GM12878 (cell line): ENCODE measurements at regions of chr19 and their contacts with region 1.

Region 1: DNA sequence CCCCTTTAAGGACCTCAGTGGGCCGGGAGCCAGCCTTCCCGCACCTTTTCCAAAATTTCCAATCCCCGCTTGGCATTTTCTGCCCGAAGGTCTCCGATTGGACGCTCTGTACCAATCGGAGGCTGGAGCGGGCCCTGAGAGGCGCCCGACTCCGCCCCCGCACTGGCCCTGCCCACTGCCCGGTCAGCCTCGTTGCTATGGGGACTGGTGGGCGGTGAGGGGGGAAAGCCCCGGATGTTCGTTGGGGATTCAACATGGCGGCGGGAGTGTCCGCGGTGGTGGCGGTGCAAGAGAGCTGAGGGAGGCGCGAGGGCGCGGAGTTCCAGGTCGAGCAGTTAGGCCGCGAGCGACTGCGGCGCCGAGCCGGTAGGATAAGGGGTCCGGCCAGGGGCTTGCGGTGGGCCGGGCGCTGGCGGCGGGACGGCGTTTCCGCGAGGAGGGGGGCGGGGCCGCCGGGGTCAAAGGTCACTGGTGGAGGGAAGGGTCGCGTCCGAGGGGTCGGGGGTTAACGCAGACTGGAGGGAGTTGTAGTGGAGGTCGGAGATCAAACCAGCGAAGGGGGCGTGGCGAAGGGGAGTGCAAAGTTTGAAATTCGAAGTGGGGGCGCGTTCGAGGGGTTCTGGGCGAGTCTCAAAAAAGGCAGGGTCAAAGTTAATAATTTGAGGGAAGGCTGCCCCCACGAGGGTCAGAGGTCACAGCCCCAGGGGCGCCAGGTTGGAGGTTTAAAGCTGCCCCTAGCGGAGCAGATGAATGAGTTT is at the start of gene PAK4:
- DNase-seq: peak; percentile 82
- ATAC-seq: peak; percentile 98
- H3K4me3 ChIP-seq: peak within 1 kb of the TSS; percentile 87
- H3K27ac ChIP-seq: peak within 1 kb of the TSS; percentile 64
- H3K4me1 ChIP-seq: peaks cover under 1% of the 10 kb centered on the region; the same call in 1 of the 2 replicates
- H3K27me3 ChIP-seq: no peaks in the 10 kb centered on the region
- CTCF ChIP-seq: no peak
- EP300 ChIP-seq: no peak
- POLR2A ChIP-seq: peak; percentile 92
- RAD21 ChIP-seq: no peak
- polyA plus RNA-seq, gene PAK4: 0.08 to 0.37 TPM

Region 2: GRCh38 chr19:39008137-39008536 is 117.6 kb before region 1 on chr19:
- CTCF ChIA-PET with region 1: no interaction called
- POLR2A ChIA-PET with region 1: no interaction called
- RAD21 ChIA-PET with region 1: no interaction called
- SMC1A ChIA-PET with region 1: no interaction called
- in situ Hi-C with region 1: no loop called
- intact Hi-C with region 1: no loop called
- DNase-seq: no peak
- ATAC-seq: no peak
- H3K4me3 ChIP-seq: no peak overlapping the region
- H3K27ac ChIP-seq: no peak overlapping the region
- H3K4me1 ChIP-seq: peaks cover 27% of the 10 kb centered on the region
- H3K27me3 ChIP-seq: no peaks in the 10 kb centered on the region
- CTCF ChIP-seq: no peak
- EP300 ChIP-seq: no peak
- POLR2A ChIP-seq: no peak
- RAD21 ChIP-seq: no peak

Region 3: DNA sequence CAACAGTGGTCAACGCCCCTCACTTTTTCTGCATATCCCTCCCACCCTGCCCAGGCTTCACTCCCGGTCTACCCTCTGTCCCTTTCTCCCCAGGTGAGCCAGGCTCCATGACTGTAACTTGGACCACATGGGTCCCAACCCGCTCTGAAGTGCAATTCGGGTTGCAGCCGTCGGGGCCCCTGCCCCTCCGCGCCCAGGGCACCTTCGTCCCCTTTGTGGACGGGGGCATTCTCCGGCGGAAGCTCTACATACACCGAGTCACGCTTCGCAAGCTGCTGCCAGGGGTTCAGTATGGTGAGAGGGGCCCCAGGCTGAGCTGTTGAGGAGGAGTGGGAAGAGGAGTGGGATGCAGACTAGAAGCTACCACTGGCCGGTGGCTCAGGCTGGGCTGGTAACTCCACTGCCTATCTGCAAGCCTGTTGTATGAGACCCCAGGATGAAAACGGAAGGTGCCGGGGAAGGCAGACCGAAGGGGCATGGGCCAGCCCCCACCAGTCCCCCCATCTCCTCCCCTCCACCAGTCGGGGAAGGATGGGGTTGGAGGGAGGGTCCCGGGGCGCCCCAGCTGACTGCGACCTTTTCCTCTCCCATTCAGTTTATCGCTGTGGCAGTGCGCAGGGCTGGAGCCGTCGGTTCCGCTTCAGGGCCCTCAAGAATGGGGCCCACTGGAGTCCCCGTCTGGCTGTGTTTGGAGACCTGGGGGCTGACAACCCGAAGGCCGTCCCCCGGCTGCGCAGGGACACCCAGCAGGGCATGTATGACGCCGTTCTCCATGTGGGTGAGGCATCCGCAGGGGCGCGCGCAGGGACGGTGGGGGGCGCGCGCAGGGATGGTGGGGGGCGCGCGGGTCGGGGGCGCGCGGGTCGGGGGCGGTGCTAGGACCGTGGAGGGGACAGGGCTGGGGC is 27.1 kb before region 1 on chr19:
- CTCF ChIA-PET with region 1: no interaction called
- POLR2A ChIA-PET with region 1: no interaction called
- RAD21 ChIA-PET with region 1: no interaction called
- SMC1A ChIA-PET with region 1: no interaction called
- in situ Hi-C with region 1: no loop called
- intact Hi-C with region 1: no loop called
- DNase-seq: no peak
- ATAC-seq: no peak
- H3K4me3 ChIP-seq: no peak overlapping the region
- H3K27ac ChIP-seq: no peak overlapping the region
- H3K4me1 ChIP-seq: no peaks in the 10 kb centered on the region
- H3K27me3 ChIP-seq: no peaks in the 10 kb centered on the region
- CTCF ChIP-seq: no peak
- EP300 ChIP-seq: no peak
- POLR2A ChIP-seq: no peak
- RAD21 ChIP-seq: no peak

Region 4: GRCh38 chr19:39187559-39187957 is 61.8 kb after region 1 on chr19:
- CTCF ChIA-PET with region 1: interaction called, 8 read pairs
- POLR2A ChIA-PET with region 1: no interaction called
- RAD21 ChIA-PET with region 1: interaction called, 5 read pairs
- SMC1A ChIA-PET with region 1: interaction called, 7 read pairs
- in situ Hi-C with region 1: no loop called
- intact Hi-C with region 1: loop called (anchors 1 kb)
- DNase-seq: no peak
- ATAC-seq: no peak; the same call in 2 of the 3 replicates
- H3K4me3 ChIP-seq: no peak overlapping the region
- H3K27ac ChIP-seq: no peak overlapping the region
- H3K4me1 ChIP-seq: no peaks in the 10 kb centered on the region
- H3K27me3 ChIP-seq: no peaks in the 10 kb centered on the region
- CTCF ChIP-seq: no peak
- EP300 ChIP-seq: no peak
- POLR2A ChIP-seq: no peak
- RAD21 ChIP-seq: no peak

Region 5: DNA sequence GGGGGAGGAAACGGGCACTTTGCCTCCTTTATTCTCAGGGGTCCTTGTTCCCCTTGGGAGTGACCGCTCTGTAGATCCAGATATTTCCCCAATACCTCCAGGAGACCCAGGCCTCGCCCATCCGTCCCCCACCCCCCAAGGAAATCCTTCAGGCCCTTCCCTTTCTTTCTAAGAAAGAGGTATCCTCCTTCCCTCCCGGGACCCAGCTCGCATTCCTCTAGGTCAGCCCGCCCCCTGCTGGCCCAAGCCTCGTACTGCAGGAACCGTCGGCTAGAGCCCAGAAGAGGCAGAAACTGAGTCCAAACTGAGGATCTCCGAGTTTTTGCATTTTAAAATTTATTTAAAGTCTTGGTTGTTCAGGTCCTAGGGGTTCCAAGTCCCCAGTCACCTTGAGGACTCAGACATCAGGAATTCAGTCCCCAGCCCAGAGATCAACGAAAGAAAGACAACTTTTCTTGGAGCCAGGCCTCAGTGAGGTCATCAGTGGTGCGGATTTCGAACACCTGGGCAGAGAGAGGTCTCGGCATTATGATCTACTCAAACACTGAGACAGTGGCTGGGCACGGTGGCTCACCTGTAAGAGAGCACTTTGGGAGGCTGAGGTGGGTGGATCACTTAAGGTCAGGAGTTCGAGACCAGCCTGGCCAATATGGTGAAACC is 202.4 kb after region 1 on chr19:
- CTCF ChIA-PET with region 1: interaction called, 20 read pairs
- POLR2A ChIA-PET with region 1: no interaction called
- RAD21 ChIA-PET with region 1: interaction called, 8 read pairs
- SMC1A ChIA-PET with region 1: interaction called, 17 read pairs
- in situ Hi-C with region 1: loop called (anchors 5 kb)
- intact Hi-C with region 1: loop called (anchors 1 kb)
- DNase-seq: no peak
- ATAC-seq: peak; percentile 80
- H3K4me3 ChIP-seq: no peak overlapping the region
- H3K27ac ChIP-seq: no peak overlapping the region
- H3K4me1 ChIP-seq: peaks cover 8% of the 10 kb centered on the region
- H3K27me3 ChIP-seq: no peaks in the 10 kb centered on the region
- CTCF ChIP-seq: peak; percentile 92 to 95 (median 92)
- EP300 ChIP-seq: no peak
- POLR2A ChIP-seq: no peak
- RAD21 ChIP-seq: peak; percentile 93

Region 6: DNA sequence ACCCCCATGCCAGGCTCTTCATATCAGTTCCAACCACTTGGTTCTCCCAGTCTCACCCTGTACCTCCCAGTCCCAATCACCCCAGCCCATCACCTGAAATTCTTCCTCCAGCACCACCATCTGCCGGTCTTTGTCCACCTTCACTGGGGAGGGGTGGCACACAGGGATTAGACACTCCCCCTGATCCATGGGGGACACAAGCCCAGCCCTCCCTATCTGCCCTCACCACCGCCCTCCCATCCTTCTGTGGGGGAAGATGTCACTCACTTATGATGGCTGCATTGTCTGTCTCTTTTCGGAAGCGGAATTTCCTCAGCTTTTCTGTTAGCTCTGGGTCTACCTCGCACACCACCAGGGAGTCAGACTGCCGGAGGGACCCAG is 209.4 kb after region 1 on chr19:
- CTCF ChIA-PET with region 1: interaction called, 16 read pairs
- POLR2A ChIA-PET with region 1: no interaction called
- RAD21 ChIA-PET with region 1: interaction called, 8 read pairs
- SMC1A ChIA-PET with region 1: interaction called, 8 read pairs
- in situ Hi-C with region 1: no loop called
- intact Hi-C with region 1: no loop called
- DNase-seq: no peak
- ATAC-seq: peak; percentile 57
- H3K4me3 ChIP-seq: peak overlapping the region; percentile 96
- H3K27ac ChIP-seq: peak overlapping the region; percentile 97
- H3K4me1 ChIP-seq: peaks cover 6% of the 10 kb centered on the region
- H3K27me3 ChIP-seq: no peaks in the 10 kb centered on the region
- CTCF ChIP-seq: no peak
- EP300 ChIP-seq: no peak
- POLR2A ChIP-seq: no peak
- RAD21 ChIP-seq: no peak